Activated CD8-positive, alpha-beta memory T cell treated with anti-CD3 and anti-CD28 coated beads, Interleukin-2, amount 10 ng/mL, durations not matched to agents 7 days and 5 days (primary cell): ENCODE measurements at regions of chr2 and their contacts with region 1.

Region 1: DNA sequence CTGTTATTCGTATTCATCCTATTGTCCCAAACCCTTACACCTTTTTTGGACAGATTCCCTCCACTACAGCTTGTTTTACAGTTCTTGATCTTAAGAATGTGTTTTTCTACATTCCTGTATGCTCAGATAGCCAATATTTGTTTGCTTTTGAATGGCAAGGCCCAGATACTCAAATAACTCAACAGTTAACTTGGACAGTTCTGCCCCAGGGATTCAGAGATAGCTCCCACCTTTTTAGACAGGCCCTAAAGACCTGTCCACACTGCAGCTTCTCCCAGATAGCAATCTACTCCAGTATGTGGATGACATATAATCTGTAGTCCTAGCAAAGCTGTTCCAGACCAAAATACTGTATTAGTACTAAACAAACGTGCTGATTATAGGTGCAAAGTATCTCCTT is 7.1 kb upstream of the AGXT start:
- DNase-seq: no peak
- ATAC-seq: no peak
- H3K4me3 Mint-ChIP-seq: no peak overlapping the region
- H3K27ac Mint-ChIP-seq: no peak overlapping the region
- H3K4me1 Mint-ChIP-seq: peaks cover 6% of the 10 kb centered on the region
- H3K27me3 Mint-ChIP-seq: peaks cover 23% of the 10 kb centered on the region

Region 2: GRCh38 chr2:240513549-240514287 is 347.8 kb before region 1 on chr2:
- CTCF ChIA-PET with region 1: no interaction called
- DNase-seq: peak; percentile 91
- ATAC-seq: peak; percentile 97
- H3K4me3 Mint-ChIP-seq: no peak overlapping the region
- H3K27ac Mint-ChIP-seq: peak overlapping the region; percentile 71
- H3K4me1 Mint-ChIP-seq: peaks cover 15% of the 10 kb centered on the region
- H3K27me3 Mint-ChIP-seq: no peaks in the 10 kb centered on the region

Region 3: DNA sequence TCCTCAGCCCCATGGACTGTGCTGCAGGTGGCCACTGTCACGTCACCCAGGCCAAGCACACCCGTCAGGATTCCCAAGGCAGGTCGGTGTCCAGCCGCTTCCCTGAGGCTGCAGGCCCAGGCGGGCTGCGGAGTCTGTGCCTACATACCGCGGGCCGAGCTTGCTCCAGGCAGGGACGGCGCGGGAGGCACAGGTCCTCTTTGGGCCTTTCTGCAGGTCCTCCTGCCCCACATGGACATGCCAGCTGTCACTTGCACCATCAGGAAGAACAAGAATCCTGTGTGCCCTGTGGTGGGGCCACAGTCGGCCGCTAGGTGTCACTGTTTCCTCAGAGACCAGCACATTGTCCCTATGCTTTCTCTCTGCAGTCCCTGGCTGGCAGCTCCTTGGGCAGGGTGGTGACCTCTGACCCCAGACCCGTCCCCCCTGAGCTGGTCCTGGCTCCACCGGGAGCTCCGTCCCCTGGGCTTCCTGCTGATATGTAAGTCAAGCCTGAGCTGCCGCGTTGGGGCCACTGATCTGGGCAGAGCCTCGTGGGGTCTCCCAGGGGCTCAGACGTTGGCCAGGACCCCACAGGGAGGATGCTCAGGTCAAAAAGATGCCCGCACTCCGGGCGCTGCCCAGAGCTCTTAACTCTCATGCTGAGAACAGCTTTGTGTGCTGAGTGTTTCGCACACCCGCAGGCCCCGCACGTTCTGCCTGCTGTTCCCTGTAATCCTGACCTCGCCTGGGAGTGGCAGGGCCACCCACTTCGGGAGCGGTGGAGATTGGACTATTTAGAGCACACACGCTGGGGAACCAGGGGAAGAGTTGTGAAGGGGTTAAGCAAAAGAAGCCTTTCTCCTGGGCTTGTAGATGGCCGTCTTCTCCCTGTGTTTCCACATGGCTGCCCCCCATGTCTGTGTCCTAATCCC is 10.2 kb before region 1 on chr2:
- CTCF ChIA-PET with region 1: interaction called, 22 read pairs
- DNase-seq: peak; percentile 86
- ATAC-seq: peak; percentile 92
- H3K4me3 Mint-ChIP-seq: no peak overlapping the region
- H3K27ac Mint-ChIP-seq: no peak overlapping the region
- H3K4me1 Mint-ChIP-seq: no peaks in the 10 kb centered on the region
- H3K27me3 Mint-ChIP-seq: peaks cover 3% of the 10 kb centered on the region